Activated T-helper 1 cell treated with anti-CD3 and anti-CD28 coated beads, Interleukin-12 subunit alpha, Interleukin-12 subunit beta, Interleukin-2, Interleukin-4 antibody, amounts not matched to agents 30 ng/mL and 10 ng/mL and 1 ng/mL, durations not matched to agents 14 hours and 24 hours and 36 hours (primary cell): ENCODE measurements at regions of chr3 and their contacts with region 1.

Region 1: GRCh38 chr3:183697610-183698317 is at the start of gene YEATS2:
- DNase-seq: peak; percentile 65
- H3K4me3 Mint-ChIP-seq: peak within 1 kb of the TSS; percentile 88
- H3K27ac Mint-ChIP-seq: peak within 1 kb of the TSS; percentile 94
- H3K4me1 Mint-ChIP-seq: peaks cover 37% of the 10 kb centered on the region
- H3K27me3 Mint-ChIP-seq: no peaks in the 10 kb centered on the region
- total RNA-seq, gene YEATS2: 54.2 and 57.4 TPM in 2 replicates

Region 2: DNA sequence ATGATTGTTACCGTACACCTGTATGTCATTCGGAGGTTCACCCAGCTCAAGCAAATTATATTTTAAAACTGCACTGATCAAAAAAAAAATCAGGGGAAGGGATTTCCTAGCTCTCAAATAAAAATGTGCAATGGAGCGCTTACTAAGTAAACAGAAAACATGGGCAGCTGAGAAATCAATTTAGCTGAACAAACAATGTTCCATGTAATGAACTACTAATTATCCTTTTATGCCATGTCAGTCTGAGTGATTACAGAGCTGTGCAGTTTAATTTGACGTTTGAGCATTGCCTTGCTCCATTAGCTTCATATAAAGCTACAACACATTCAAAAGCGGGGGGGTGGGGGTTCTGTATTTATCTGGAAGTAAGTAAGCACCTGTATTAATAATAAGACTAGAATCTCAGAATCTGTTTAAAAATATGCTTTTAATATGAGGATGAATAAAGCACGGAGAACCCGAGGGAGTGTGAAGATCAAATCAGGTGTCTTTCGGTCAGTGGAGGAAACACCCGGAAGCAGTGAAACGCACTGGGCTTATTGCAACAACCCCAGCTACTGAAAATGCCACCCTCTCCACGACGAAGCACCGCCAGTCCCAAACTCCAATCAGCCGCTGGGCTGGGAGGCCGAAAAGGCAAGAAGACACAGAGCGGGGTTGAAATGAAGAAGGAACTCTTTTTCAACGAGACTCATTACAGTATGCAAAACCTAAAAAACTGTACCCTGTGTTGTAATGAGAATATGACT is 1100.9 kb before region 1 on chr3:
- intact Hi-C with region 1: no loop called
- DNase-seq: no peak
- H3K4me3 Mint-ChIP-seq: no peak overlapping the region
- H3K27ac Mint-ChIP-seq: no peak overlapping the region
- H3K4me1 Mint-ChIP-seq: no peaks in the 10 kb centered on the region
- H3K27me3 Mint-ChIP-seq: no peaks in the 10 kb centered on the region

Region 3: GRCh38 chr3:183427876-183428446 is 269.8 kb before region 1 on chr3:
- intact Hi-C with region 1: loop called (anchors 1 kb)
- DNase-seq: peak; percentile 14
- H3K4me3 Mint-ChIP-seq: peak overlapping the region; percentile 82
- H3K27ac Mint-ChIP-seq: peak overlapping the region; percentile 42
- H3K4me1 Mint-ChIP-seq: peaks cover 33% of the 10 kb centered on the region
- H3K27me3 Mint-ChIP-seq: peaks cover 9% of the 10 kb centered on the region

Region 4: GRCh38 chr3:183664913-183665381 is 32.8 kb before region 1 on chr3:
- intact Hi-C with region 1: no loop called
- DNase-seq: no peak
- H3K4me3 Mint-ChIP-seq: no peak overlapping the region
- H3K27ac Mint-ChIP-seq: no peak overlapping the region
- H3K4me1 Mint-ChIP-seq: no peaks in the 10 kb centered on the region
- H3K27me3 Mint-ChIP-seq: no peaks in the 10 kb centered on the region

Region 5: GRCh38 chr3:183714622-183715021 is 16.9 kb after region 1 on chr3:
- intact Hi-C with region 1: no loop called
- DNase-seq: no peak
- H3K4me3 Mint-ChIP-seq: no peak overlapping the region
- H3K27ac Mint-ChIP-seq: no peak overlapping the region
- H3K4me1 Mint-ChIP-seq: peaks cover 4% of the 10 kb centered on the region
- H3K27me3 Mint-ChIP-seq: no peaks in the 10 kb centered on the region